CD4-positive, alpha-beta memory T cell (primary cell): ENCODE measurements at regions of chr1 and their contacts with region 1.

Region 1: DNA sequence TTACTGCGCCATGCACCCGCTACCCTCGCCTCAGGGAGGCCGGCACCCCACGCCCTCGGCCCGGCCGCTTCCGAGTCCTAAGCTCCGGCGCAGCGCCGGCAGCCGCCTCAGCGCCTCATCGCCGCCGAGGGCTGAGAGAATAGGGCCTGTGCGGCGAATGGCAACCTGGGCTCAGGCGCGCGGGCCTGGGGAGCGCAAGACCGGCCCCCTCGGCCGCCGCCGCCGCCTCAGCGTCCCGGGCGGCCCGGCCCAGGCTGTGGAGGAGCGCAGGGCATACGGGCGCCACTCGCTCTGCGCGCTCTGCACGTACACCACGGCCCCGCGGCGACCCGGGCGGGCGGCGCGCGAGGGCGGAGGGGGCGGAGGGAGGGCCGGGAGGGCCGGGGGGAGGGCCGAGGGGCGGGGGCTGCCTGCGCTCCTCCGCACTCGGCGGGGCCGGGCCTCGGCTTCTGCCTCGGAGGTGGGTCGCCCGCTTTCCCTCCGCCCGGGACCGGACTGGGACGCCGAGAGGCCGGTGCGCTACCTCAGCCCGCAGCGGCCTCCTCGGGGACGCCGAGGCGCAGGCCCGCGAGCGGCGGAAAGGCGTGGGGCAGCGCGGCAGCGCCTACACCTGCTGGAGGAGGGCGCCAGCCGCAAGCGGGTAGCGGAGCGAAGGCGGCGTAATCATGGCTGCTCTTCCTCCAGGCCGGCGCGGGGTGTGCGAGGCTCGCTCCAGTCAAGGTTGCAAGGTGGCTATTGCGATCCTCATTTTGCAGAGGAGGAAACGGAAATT is at the start of gene EGLN1:
- DNase-seq: peak; percentile 79 to 85 (median 84)
- H3K4me3 ChIP-seq: peak within 1 kb of the TSS; percentile 70 to 80
- H3K4me3 Mint-ChIP-seq: peak within 1 kb of the TSS; percentile 90 to 97 (median 95)
- H3K27ac ChIP-seq: peak within 1 kb of the TSS; percentile 63
- H3K27ac Mint-ChIP-seq: peak within 1 kb of the TSS; percentile 83 to 98 (median 95)
- H3K4me1 ChIP-seq: peaks cover 43% of the 10 kb centered on the region
- H3K4me1 Mint-ChIP-seq: peaks cover 29 to 49% (median 38%) of the 10 kb centered on the region in 4 donors
- H3K27me3 ChIP-seq: no peaks in the 10 kb centered on the region
- H3K27me3 Mint-ChIP-seq: no peaks in the 10 kb centered on the region
- total RNA-seq, gene EGLN1: 23.5 to 29.3 TPM

Region 2: GRCh38 chr1:231200388-231201031 is 221.7 kb before region 1 on chr1:
- CTCF ChIA-PET with region 1: no interaction called
- POLR2A ChIA-PET with region 1: no interaction called
- intact Hi-C with region 1: no loop called
- DNase-seq: no peak
- H3K4me3 ChIP-seq: no peak overlapping the region
- H3K4me3 Mint-ChIP-seq: no peak overlapping the region
- H3K27ac ChIP-seq: no peak overlapping the region
- H3K27ac Mint-ChIP-seq: no peak overlapping the region
- H3K4me1 ChIP-seq: no peaks in the 10 kb centered on the region
- H3K4me1 Mint-ChIP-seq: peaks cover 6 to 16% (median 10%) of the 10 kb centered on the region in 4 donors
- H3K27me3 ChIP-seq: no peaks in the 10 kb centered on the region
- H3K27me3 Mint-ChIP-seq: peaks cover 5% of the 10 kb centered on the region in 2 donors

Region 3: GRCh38 chr1:231240883-231241735 is 181.1 kb before region 1 on chr1 and contains the start of gene GNPAT:
- CTCF ChIA-PET with region 1: no interaction called
- POLR2A ChIA-PET with region 1: no interaction called
- intact Hi-C with region 1: loop called (anchors 5 kb)
- DNase-seq: peak; percentile 87 to 94 (median 91)
- H3K4me3 ChIP-seq: peak within 1 kb of the TSS; percentile 83 to 99
- H3K4me3 Mint-ChIP-seq: peak within 1 kb of the TSS; percentile 95 to 99 (median 98)
- H3K27ac ChIP-seq: peak within 1 kb of the TSS; percentile 93
- H3K27ac Mint-ChIP-seq: peak within 1 kb of the TSS; percentile 85 to 99 (median 98)
- H3K4me1 ChIP-seq: peaks cover 56% of the 10 kb centered on the region
- H3K4me1 Mint-ChIP-seq: peaks cover 55 to 85% (median 71%) of the 10 kb centered on the region in 4 donors
- H3K27me3 ChIP-seq: no peaks in the 10 kb centered on the region
- H3K27me3 Mint-ChIP-seq: no peaks in the 10 kb centered on the region
- total RNA-seq, gene GNPAT: 36.9 to 41.2 TPM

Region 4: GRCh38 chr1:231376875-231377549 is 45.2 kb before region 1 on chr1:
- CTCF ChIA-PET with region 1: no interaction called
- POLR2A ChIA-PET with region 1: no interaction called
- intact Hi-C with region 1: loop called (anchors 5 kb)
- DNase-seq: peak in 1 of 5 donors; percentile 6
- H3K4me3 ChIP-seq: no peak overlapping the region
- H3K4me3 Mint-ChIP-seq: peak overlapping the region in 2 of 8 donors; percentile 0 to 2
- H3K27ac ChIP-seq: no peak overlapping the region
- H3K27ac Mint-ChIP-seq: peak overlapping the region in 6 of 7 donors; percentile 2 to 73 (median 34)
- H3K4me1 ChIP-seq: peaks cover 13% of the 10 kb centered on the region
- H3K4me1 Mint-ChIP-seq: peaks cover 36 to 56% (median 44%) of the 10 kb centered on the region in 4 donors
- H3K27me3 ChIP-seq: no peaks in the 10 kb centered on the region
- H3K27me3 Mint-ChIP-seq: no peaks in the 10 kb centered on the region

Region 5: GRCh38 chr1:231460614-231461013 is 38.4 kb after region 1 on chr1:
- CTCF ChIA-PET with region 1: no interaction called
- POLR2A ChIA-PET with region 1: no interaction called
- intact Hi-C with region 1: loop called (anchors 2 kb)
- DNase-seq: peak; percentile 76 to 83 (median 78)
- H3K4me3 ChIP-seq: no peak overlapping the region
- H3K4me3 Mint-ChIP-seq: peak overlapping the region in 4 of 8 donors; percentile 1 to 43 (median 1)
- H3K27ac ChIP-seq: no peak overlapping the region
- H3K27ac Mint-ChIP-seq: peak overlapping the region in 4 of 7 donors; percentile 13 to 51 (median 30)
- H3K4me1 ChIP-seq: peaks cover 20% of the 10 kb centered on the region
- H3K4me1 Mint-ChIP-seq: peaks cover 10 to 18% (median 15%) of the 10 kb centered on the region in 4 donors
- H3K27me3 ChIP-seq: peaks cover 9% of the 10 kb centered on the region
- H3K27me3 Mint-ChIP-seq: peaks cover 40 to 46% of the 10 kb centered on the region in 2 donors

Region 6: DNA sequence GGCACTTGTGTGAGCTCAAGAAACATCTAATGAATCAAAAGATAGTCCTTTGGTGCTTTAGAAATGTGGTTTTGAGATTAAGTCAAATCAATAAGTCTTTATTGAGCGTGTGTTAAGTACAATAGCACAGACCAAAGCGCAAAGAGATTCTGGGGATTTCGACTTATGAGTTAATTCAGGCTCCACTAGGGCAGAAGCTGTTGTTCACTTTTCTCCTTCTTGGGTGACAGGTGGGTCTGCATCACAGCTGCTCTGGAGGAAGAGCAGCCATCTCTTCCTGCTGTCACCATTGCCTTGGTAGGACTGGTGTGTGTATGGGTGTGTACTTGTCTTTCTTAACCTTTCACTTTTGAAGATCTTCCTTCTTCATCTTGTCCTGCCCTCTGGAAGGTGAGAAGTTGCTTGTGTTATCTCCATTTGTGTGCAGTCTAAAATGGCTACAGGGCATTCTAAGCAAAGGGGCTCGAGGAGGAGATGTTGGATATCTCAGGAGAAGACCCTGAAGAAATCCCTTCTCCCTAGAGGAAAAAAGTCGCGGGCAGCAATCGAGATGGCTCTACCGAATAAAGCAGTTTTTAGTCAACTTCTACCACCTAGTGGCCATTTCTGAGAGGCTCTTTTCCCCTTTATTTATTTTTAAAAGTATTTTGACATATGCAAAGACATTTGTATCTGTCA is 181.6 kb after region 1 on chr1:
- CTCF ChIA-PET with region 1: interaction called, 3 read pairs
- POLR2A ChIA-PET with region 1: interaction called, 5 read pairs
- intact Hi-C with region 1: loop called (anchors 5 kb)
- DNase-seq: peak in 4 of 5 donors; percentile 60 to 67 (median 63)
- H3K4me3 ChIP-seq: peak overlapping the region; percentile 63 to 74
- H3K4me3 Mint-ChIP-seq: peak overlapping the region; percentile 89 to 97 (median 94)
- H3K27ac ChIP-seq: peak overlapping the region; percentile 48
- H3K27ac Mint-ChIP-seq: peak overlapping the region; percentile 70 to 92 (median 89)
- H3K4me1 ChIP-seq: no peaks in the 10 kb centered on the region
- H3K4me1 Mint-ChIP-seq: peaks cover 7 to 8% (median 8%) of the 10 kb centered on the region in 4 donors
- H3K27me3 ChIP-seq: no peaks in the 10 kb centered on the region
- H3K27me3 Mint-ChIP-seq: no peaks in the 10 kb centered on the region